ENCODE measurements at regions of chr15 and their contacts with region 1.

Region 1: GRCh38 chr15:60890375-60891230 is 338.5 kb downstream of the RORA start:
- DNase-seq: no peak
- H3K4me3 ChIP-seq: no peak overlapping the region
- H3K27ac ChIP-seq: no peak overlapping the region
- H3K4me1 ChIP-seq: no peaks in the 10 kb centered on the region
- H3K27me3 ChIP-seq: no peaks in the 10 kb centered on the region
- CTCF ChIP-seq: no peak

Region 2: DNA sequence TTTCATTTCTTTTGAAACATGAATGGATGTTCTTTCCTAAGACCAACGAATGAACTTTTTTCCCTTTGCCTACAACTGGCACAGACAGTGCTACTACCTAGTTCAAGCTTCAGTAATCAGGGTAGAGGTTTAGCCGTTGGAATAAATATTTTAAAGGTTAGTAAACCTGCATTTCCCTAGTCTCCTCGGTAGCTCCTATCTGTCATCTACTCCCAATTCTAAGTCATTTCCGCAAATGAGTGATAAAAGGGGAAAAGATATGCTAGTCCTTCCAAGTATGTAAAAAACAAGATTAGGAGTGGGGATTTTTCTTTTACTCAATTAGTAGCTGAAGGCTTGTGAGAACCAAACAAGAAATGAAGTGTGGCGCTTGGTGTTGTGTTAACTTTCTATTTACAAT is 1972.4 kb before region 1 on chr15:
- intact Hi-C with region 1: loop called (anchors 5 kb)
- DNase-seq: no peak
- H3K4me3 ChIP-seq: no peak overlapping the region
- H3K27ac ChIP-seq: no peak overlapping the region
- H3K4me1 ChIP-seq: peaks cover 0 to 27% (median 5%) of the 10 kb centered on the region in 4 donors
- H3K27me3 ChIP-seq: no peaks in the 10 kb centered on the region
- CTCF ChIP-seq: no peak

Region 3: DNA sequence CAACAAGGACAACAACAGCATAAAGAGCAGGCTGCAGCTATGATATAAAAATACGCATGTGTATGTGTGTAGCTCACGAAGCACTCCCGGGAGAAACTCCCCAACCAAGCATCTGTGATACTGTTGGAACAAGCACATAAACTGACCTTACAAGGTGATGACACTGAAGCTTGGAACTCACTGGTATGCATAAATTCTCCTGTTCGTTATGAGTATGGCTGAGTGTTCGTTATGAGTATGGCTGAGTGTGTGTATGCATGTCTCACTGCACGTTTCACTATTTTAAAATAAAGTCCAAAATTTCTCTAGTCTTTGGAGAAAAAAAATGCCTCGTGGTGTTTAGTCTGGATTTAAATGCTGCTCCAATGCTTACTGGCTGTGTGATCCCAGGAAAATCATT is 81.7 kb after region 1 on chr15:
- intact Hi-C with region 1: no loop called
- DNase-seq: no peak
- H3K4me3 ChIP-seq: no peak overlapping the region
- H3K27ac ChIP-seq: no peak overlapping the region
- H3K4me1 ChIP-seq: peaks cover 0 to 22% (median 11%) of the 10 kb centered on the region in 4 donors
- H3K27me3 ChIP-seq: no peaks in the 10 kb centered on the region
- CTCF ChIP-seq: no peak

Region 4: GRCh38 chr15:61069394-61070075 is 178.9 kb after region 1 on chr15:
- intact Hi-C with region 1: no loop called
- DNase-seq: no peak
- H3K4me3 ChIP-seq: no peak overlapping the region
- H3K27ac ChIP-seq: no peak overlapping the region
- H3K4me1 ChIP-seq: peaks cover 0 to 17% (median 5%) of the 10 kb centered on the region in 4 donors
- H3K27me3 ChIP-seq: no peaks in the 10 kb centered on the region
- CTCF ChIP-seq: no peak

Measured in tibial artery (tissue), 4 donors.